ENCODE measurements at regions of chr4 and their contacts with region 1.

Region 1: GRCh38 chr4:76515975-76516843 is 81.2 kb downstream of the SHROOM3 start:
- DNase-seq: no peak
- ATAC-seq: no peak
- H3K4me3 ChIP-seq: no peak overlapping the region
- H3K27ac ChIP-seq: no peak overlapping the region
- H3K4me1 ChIP-seq: no peaks in the 10 kb centered on the region
- H3K27me3 ChIP-seq: no peaks in the 10 kb centered on the region
- CTCF ChIP-seq: no peak
- EP300 ChIP-seq: no peak
- POLR2A ChIP-seq: no peak
- RAD21 ChIP-seq: no peak

Region 2: DNA sequence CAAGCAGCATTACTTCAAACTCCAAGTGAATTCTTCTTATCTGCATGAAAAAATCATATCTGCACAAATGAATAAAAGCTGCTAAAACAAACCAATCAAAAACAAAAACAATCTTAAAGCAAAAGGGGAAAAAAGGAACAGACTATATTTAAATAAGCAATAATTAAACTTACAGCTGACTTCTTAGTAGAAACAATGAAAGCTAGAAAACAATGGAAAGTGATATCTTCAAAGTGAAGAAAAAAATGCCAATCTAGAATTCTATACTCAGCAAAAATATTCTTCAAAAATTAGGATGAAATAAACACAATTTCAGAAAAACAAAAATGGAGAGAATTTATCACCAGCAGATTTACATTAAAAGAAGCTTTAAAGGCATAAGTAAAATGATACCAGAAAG is 189.7 kb before region 1 on chr4:
- CTCF ChIA-PET with region 1: no interaction called
- POLR2A ChIA-PET with region 1: no interaction called
- in situ Hi-C with region 1: no loop called
- intact Hi-C with region 1: no loop called
- DNase-seq: no peak
- ATAC-seq: no peak
- H3K4me3 ChIP-seq: no peak overlapping the region
- H3K27ac ChIP-seq: no peak overlapping the region
- H3K4me1 ChIP-seq: no peaks in the 10 kb centered on the region
- H3K27me3 ChIP-seq: no peaks in the 10 kb centered on the region
- CTCF ChIP-seq: no peak
- EP300 ChIP-seq: no peak
- POLR2A ChIP-seq: no peak
- RAD21 ChIP-seq: no peak

Region 3: GRCh38 chr4:76733068-76733771 is 217.0 kb after region 1 on chr4:
- CTCF ChIA-PET with region 1: no interaction called
- POLR2A ChIA-PET with region 1: no interaction called
- in situ Hi-C with region 1: no loop called
- intact Hi-C with region 1: loop called (anchors 5 kb)
- DNase-seq: no peak
- ATAC-seq: peak; percentile 54
- H3K4me3 ChIP-seq: no peak overlapping the region
- H3K27ac ChIP-seq: no peak overlapping the region
- H3K4me1 ChIP-seq: no peaks in the 10 kb centered on the region
- H3K27me3 ChIP-seq: 0 out of 5 replicates have a peak, but pooled peaks cover 0 to 3% of the 10 kb centered on the region in 2 experiments
- CTCF ChIP-seq: peak; percentile 59
- EP300 ChIP-seq: no peak
- POLR2A ChIP-seq: no peak
- RAD21 ChIP-seq: no peak

Region 4: GRCh38 chr4:76748649-76749048 is 232.4 kb after region 1 on chr4:
- CTCF ChIA-PET with region 1: interaction called, 8 read pairs
- POLR2A ChIA-PET with region 1: no interaction called
- in situ Hi-C with region 1: no loop called
- intact Hi-C with region 1: loop called (anchors 1 kb)
- DNase-seq: peak; percentile 12
- ATAC-seq: no peak
- H3K4me3 ChIP-seq: no peak overlapping the region
- H3K27ac ChIP-seq: no peak overlapping the region
- H3K4me1 ChIP-seq: no peaks in the 10 kb centered on the region
- H3K27me3 ChIP-seq: no peaks in the 10 kb centered on the region; a peak in 1 of 5 replicates
- CTCF ChIP-seq: peak; percentile 35
- EP300 ChIP-seq: no peak
- POLR2A ChIP-seq: no peak
- RAD21 ChIP-seq: no peak

Region 5: GRCh38 chr4:76758290-76758882 is 242.2 kb after region 1 on chr4:
- CTCF ChIA-PET with region 1: interaction called, 27 read pairs
- POLR2A ChIA-PET with region 1: no interaction called
- in situ Hi-C with region 1: no loop called
- intact Hi-C with region 1: loop called (anchors 1 kb)
- DNase-seq: peak; percentile 28
- ATAC-seq: peak; percentile 77
- H3K4me3 ChIP-seq: no peak overlapping the region
- H3K27ac ChIP-seq: no peak overlapping the region
- H3K4me1 ChIP-seq: no peaks in the 10 kb centered on the region
- H3K27me3 ChIP-seq: peaks cover 0 to 6% of the 10 kb centered on the region in 2 experiments; a peak in 3 of 5 replicates
- CTCF ChIP-seq: peak; percentile 64
- EP300 ChIP-seq: no peak
- POLR2A ChIP-seq: no peak
- RAD21 ChIP-seq: no peak

Region 6: GRCh38 chr4:76984127-76984526 is 467.9 kb after region 1 on chr4:
- CTCF ChIA-PET with region 1: no interaction called
- POLR2A ChIA-PET with region 1: no interaction called
- in situ Hi-C with region 1: no loop called
- intact Hi-C with region 1: loop called (anchors 1 kb)
- DNase-seq: peak; percentile 10
- ATAC-seq: peak; percentile 67
- H3K4me3 ChIP-seq: no peak overlapping the region
- H3K27ac ChIP-seq: no peak overlapping the region
- H3K4me1 ChIP-seq: peaks cover 19% of the 10 kb centered on the region
- H3K27me3 ChIP-seq: no peaks in the 10 kb centered on the region
- CTCF ChIP-seq: 0 out of 2 replicates have a peak, but pooled peaks have one; percentile 11
- EP300 ChIP-seq: no peak
- POLR2A ChIP-seq: no peak
- RAD21 ChIP-seq: no peak

Region 7: DNA sequence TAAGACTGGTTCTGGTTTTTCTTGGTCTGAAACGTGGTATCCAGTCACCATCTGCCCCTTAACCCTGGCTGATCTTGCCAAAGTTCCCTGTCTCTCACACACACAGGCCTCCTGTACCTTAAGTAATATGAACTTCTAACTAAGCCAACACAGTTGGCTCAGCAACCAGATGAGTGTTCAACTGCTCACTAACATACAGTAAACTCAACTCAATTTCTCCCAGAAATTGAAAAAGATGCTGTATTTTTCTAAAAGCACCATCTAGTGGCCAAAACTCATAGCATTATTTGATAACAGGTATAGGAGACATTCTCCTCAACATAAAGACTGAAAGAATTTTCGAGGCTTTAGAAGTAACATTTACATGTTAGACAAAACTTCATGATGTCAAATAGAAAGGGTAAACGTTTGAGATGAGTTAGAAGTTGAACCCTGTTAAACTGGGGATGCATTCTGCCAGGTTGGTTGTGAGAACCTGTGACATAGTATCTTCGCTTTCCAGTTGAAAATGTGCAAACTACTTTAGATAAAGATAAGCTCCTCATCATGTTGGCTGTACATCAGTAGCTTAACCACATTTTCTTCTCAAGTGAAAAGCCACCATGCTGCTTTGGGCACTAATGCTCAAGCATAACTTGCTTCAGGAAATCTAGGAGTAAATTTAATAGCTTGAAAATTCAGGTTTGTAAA is 528.4 kb after region 1 on chr4:
- CTCF ChIA-PET with region 1: interaction called, 5 read pairs
- POLR2A ChIA-PET with region 1: no interaction called
- in situ Hi-C with region 1: no loop called
- intact Hi-C with region 1: loop called (anchors 10 kb)
- DNase-seq: peak; percentile 9
- ATAC-seq: peak; percentile 39
- H3K4me3 ChIP-seq: no peak overlapping the region
- H3K27ac ChIP-seq: no peak overlapping the region
- H3K4me1 ChIP-seq: peaks cover 13% of the 10 kb centered on the region
- H3K27me3 ChIP-seq: no peaks in the 10 kb centered on the region
- CTCF ChIP-seq: peak; percentile 58
- EP300 ChIP-seq: no peak
- POLR2A ChIP-seq: no peak
- RAD21 ChIP-seq: no peak